ENCODE measurements at regions of chr10 and their contacts with region 1.

Region 1: GRCh38 chr10:35195361-35196306 is 69.0 kb downstream of the CREM start:
- DNase-seq: peak; percentile 88 to 97 (median 94)
- H3K4me3 ChIP-seq: peak overlapping the region; percentile 57 to 73
- H3K4me3 Mint-ChIP-seq: peak overlapping the region; percentile 75 to 91 (median 89)
- H3K27ac ChIP-seq: peak overlapping the region; percentile 93
- H3K27ac Mint-ChIP-seq: peak overlapping the region; percentile 91 to 100 (median 99)
- H3K4me1 ChIP-seq: peaks cover 25% of the 10 kb centered on the region
- H3K4me1 Mint-ChIP-seq: peaks cover 16 to 25% (median 17%) of the 10 kb centered on the region in 4 donors
- H3K27me3 ChIP-seq: no peaks in the 10 kb centered on the region
- H3K27me3 Mint-ChIP-seq: no peaks in the 10 kb centered on the region

Region 2: DNA sequence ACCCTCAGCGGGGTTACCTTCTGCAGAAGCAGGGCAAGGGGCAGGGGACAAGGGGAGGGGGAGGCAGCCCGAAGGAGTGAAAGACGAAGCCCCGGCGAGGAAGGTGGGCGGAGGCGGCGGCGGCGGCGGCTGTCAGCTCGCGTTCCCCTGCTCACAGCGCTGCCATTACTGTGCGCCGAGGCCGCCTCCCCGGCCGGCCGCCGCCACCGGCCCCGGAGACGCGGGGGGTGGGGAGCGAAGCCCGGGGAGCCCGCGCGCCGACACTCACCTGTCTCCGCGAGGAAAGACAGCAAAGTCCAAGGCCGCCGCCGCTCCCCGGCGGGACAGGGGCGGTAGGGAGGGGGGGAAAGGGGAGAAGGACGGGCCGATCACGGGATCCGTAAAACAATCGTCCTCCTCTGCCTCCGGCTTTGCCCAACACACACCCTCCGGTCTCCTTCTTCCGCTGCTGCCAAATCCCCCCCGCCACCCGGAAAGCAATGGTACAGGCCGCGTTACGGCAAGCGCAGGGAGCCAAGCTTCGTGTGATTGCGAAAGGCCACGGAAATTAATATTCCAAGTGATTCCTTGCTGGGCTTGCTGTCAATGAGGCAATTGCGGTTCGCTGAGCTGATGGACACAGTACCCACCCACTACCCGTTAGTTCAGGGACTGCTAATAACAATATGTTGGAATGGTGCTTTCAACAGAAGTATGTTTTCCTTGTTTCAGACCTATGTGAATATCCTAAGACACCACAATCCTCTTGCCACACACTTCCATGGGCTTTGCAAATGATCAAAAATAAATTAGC is 105.3 kb before region 1 on chr10 and contains the start of gene CUL2:
- CTCF ChIA-PET with region 1: interaction called, 3 read pairs
- POLR2A ChIA-PET with region 1: interaction called, 26 read pairs
- intact Hi-C with region 1: loop called (anchors 1 kb)
- DNase-seq: peak; percentile 91 to 97 (median 93)
- H3K4me3 ChIP-seq: peak within 1 kb of the TSS; percentile 80 to 90
- H3K4me3 Mint-ChIP-seq: peak within 1 kb of the TSS; percentile 96 to 100 (median 98)
- H3K27ac ChIP-seq: peak within 1 kb of the TSS; percentile 89
- H3K27ac Mint-ChIP-seq: peak within 1 kb of the TSS; percentile 97 to 100 (median 99)
- H3K4me1 ChIP-seq: peaks cover 48% of the 10 kb centered on the region
- H3K4me1 Mint-ChIP-seq: peaks cover 37 to 57% (median 45%) of the 10 kb centered on the region in 4 donors
- H3K27me3 ChIP-seq: no peaks in the 10 kb centered on the region
- H3K27me3 Mint-ChIP-seq: peaks cover under 1 to 1% of the 10 kb centered on the region in 2 donors
- total RNA-seq, gene CUL2: 34.6 to 37.8 TPM

Region 3: GRCh38 chr10:35153716-35154479 is 41.7 kb before region 1 on chr10:
- CTCF ChIA-PET with region 1: interaction called, 15 read pairs
- POLR2A ChIA-PET with region 1: interaction called, 25 read pairs
- intact Hi-C with region 1: loop called (anchors 2 kb)
- DNase-seq: no peak
- H3K4me3 ChIP-seq: no peak overlapping the region
- H3K4me3 Mint-ChIP-seq: no peak overlapping the region
- H3K27ac ChIP-seq: no peak overlapping the region
- H3K27ac Mint-ChIP-seq: peak overlapping the region in 2 of 7 donors; percentile 42 to 72
- H3K4me1 ChIP-seq: peaks cover 21% of the 10 kb centered on the region
- H3K4me1 Mint-ChIP-seq: peaks cover 16 to 35% (median 22%) of the 10 kb centered on the region in 4 donors
- H3K27me3 ChIP-seq: no peaks in the 10 kb centered on the region
- H3K27me3 Mint-ChIP-seq: no peaks in the 10 kb centered on the region

Region 4: DNA sequence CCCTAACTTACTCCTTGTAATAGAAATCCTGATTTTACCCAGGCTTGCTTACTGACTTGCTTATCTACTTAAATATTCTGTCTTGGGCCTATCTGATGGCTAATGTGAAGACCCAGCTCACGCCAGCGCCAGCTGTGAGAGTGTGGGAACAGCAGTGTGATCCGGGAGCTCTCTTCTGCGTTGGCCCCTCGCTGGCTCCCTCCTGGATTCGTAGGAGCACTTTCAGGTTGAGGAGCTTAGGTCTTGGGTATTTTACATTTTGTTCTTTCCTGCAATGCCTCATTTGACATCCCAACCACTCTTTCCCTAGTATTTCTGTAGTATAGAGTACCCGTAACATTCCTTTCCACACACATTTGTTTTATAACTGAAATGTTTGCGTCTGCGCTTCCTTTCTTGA is 17.3 kb before region 1 on chr10:
- CTCF ChIA-PET with region 1: interaction called, 18 read pairs
- POLR2A ChIA-PET with region 1: interaction called, 6 read pairs
- intact Hi-C with region 1: no loop called
- DNase-seq: no peak
- H3K4me3 ChIP-seq: no peak overlapping the region
- H3K4me3 Mint-ChIP-seq: no peak overlapping the region
- H3K27ac ChIP-seq: no peak overlapping the region
- H3K27ac Mint-ChIP-seq: no peak overlapping the region
- H3K4me1 ChIP-seq: no peaks in the 10 kb centered on the region
- H3K4me1 Mint-ChIP-seq: no peaks in the 10 kb centered on the region
- H3K27me3 ChIP-seq: no peaks in the 10 kb centered on the region
- H3K27me3 Mint-ChIP-seq: no peaks in the 10 kb centered on the region

Region 5: DNA sequence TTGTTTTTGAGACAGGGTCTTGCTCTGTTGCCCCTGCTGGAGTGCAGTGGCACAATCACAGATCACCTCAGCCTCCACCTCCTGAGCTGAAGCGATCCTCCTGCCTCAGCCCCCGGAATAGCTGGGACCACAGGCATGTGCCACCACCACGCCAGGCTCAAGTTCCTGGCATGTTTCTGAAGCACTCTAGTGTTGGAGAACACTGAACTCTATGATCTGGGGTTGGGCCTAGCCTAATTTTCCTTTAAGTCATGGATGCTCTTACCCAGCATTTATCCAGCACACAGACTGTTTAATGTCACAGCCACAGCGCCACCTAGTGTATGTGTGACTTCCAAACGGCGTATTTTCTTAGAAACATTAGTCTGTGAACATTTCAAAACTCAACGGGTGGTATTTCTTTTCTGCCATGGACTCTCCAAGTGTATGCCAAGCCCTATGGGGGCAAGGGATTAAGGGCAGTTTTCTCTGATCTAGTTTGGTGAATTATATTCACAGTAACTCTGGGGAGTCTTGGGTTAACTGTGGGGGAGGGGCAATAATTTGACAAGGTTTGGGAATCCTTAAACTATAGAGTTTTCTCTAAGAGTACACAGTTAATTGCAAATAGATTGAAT is 22.8 kb after region 1 on chr10:
- CTCF ChIA-PET with region 1: interaction called, 107 read pairs
- POLR2A ChIA-PET with region 1: interaction called, 13 read pairs
- intact Hi-C with region 1: loop called (anchors 1 kb)
- DNase-seq: peak; percentile 78 to 85 (median 79)
- H3K4me3 ChIP-seq: no peak overlapping the region
- H3K4me3 Mint-ChIP-seq: peak overlapping the region in 6 of 8 donors; percentile 41 to 73 (median 69)
- H3K27ac ChIP-seq: no peak overlapping the region
- H3K27ac Mint-ChIP-seq: peak overlapping the region; percentile 7 to 94 (median 92)
- H3K4me1 ChIP-seq: peaks cover 9% of the 10 kb centered on the region
- H3K4me1 Mint-ChIP-seq: peaks cover 6 to 8% (median 7%) of the 10 kb centered on the region in 4 donors
- H3K27me3 ChIP-seq: no peaks in the 10 kb centered on the region
- H3K27me3 Mint-ChIP-seq: peaks cover 0 to 16% of the 10 kb centered on the region in 2 donors

Region 6: DNA sequence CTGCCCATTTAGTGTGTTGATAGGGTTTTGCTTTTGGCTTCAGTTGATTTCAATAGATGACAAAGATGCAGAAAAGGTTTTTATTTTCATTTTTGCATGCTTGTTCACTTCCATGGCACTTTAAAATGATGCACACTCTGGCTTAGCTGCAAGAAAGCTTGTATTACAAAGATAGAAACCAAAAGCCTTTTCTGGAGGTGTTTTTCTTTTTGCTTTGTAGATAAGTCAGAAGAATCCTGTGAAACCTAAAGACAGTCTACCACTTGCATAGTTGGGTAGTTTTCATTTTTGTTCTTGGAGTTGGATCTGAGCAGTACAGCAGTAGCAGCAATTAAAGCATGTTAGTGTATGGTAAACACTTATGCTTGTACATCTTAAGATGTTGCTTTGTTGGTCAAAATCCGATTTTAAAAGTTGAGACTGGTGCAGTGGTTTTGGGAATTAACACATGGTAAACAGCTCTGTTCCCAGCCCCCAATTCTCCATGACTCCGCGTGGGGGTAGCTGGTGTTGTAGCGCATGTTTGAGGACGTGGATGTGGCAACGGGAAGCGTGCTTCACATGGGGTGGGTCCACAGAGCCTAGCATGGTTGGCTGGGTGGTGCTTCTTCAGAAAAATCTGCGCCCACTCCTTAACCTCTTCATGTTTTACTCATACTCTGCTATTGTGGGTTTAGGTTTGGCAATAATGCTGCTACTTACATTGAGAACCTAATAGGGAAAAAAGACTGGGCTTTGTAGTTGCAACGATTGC is 160.5 kb after region 1 on chr10:
- CTCF ChIA-PET with region 1: no interaction called
- POLR2A ChIA-PET with region 1: no interaction called
- intact Hi-C with region 1: no loop called
- DNase-seq: no peak
- H3K4me3 ChIP-seq: no peak overlapping the region
- H3K4me3 Mint-ChIP-seq: peak overlapping the region in 6 of 8 donors; percentile 51 to 78 (median 60)
- H3K27ac ChIP-seq: no peak overlapping the region
- H3K27ac Mint-ChIP-seq: peak overlapping the region in 4 of 7 donors; percentile 17 to 71 (median 69)
- H3K4me1 ChIP-seq: peaks cover 65% of the 10 kb centered on the region
- H3K4me1 Mint-ChIP-seq: peaks cover 65 to 88% (median 76%) of the 10 kb centered on the region in 4 donors
- H3K27me3 ChIP-seq: no peaks in the 10 kb centered on the region
- H3K27me3 Mint-ChIP-seq: no peaks in the 10 kb centered on the region

Region 7: DNA sequence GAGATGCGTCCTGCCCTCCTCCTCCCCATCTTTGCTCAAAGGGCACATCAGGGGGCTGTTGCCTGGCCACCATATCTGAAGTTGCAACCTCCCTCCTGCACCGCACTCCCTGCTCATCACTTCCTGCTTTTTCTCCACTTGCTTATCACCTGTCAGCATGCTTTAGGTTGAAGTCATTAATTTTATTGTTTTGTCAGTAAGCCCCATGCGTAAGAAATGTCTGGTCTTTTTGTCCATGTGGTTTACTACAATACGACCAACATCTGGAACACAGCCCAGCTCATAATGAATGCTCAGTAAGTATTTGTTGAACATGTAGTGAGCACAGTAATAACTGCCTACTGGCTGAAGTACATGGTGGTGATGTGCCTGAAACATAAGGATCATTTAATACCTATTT is 337.9 kb after region 1 on chr10:
- CTCF ChIA-PET with region 1: no interaction called
- POLR2A ChIA-PET with region 1: no interaction called
- intact Hi-C with region 1: no loop called
- DNase-seq: no peak
- H3K4me3 ChIP-seq: no peak overlapping the region
- H3K4me3 Mint-ChIP-seq: no peak overlapping the region
- H3K27ac ChIP-seq: no peak overlapping the region
- H3K27ac Mint-ChIP-seq: peak overlapping the region in 2 of 7 donors; percentile 33 to 63
- H3K4me1 ChIP-seq: no peaks in the 10 kb centered on the region
- H3K4me1 Mint-ChIP-seq: peaks cover 17 to 22% (median 19%) of the 10 kb centered on the region in 4 donors
- H3K27me3 ChIP-seq: no peaks in the 10 kb centered on the region
- H3K27me3 Mint-ChIP-seq: no peaks in the 10 kb centered on the region

Region 8: GRCh38 chr10:35690534-35690933 is 494.9 kb after region 1 on chr10:
- CTCF ChIA-PET with region 1: no interaction called
- POLR2A ChIA-PET with region 1: no interaction called
- intact Hi-C with region 1: no loop called
- DNase-seq: no peak
- H3K4me3 ChIP-seq: no peak overlapping the region
- H3K4me3 Mint-ChIP-seq: no peak overlapping the region
- H3K27ac ChIP-seq: no peak overlapping the region
- H3K27ac Mint-ChIP-seq: no peak overlapping the region
- H3K4me1 ChIP-seq: no peaks in the 10 kb centered on the region
- H3K4me1 Mint-ChIP-seq: peaks cover 0 to 5% (median 0%) of the 10 kb centered on the region in 4 donors
- H3K27me3 ChIP-seq: no peaks in the 10 kb centered on the region
- H3K27me3 Mint-ChIP-seq: peaks cover 1 to 4% of the 10 kb centered on the region in 2 donors

Measured in CD4-positive, alpha-beta memory T cell (primary cell).